Endothelial cell of umbilical vein (primary cell): ENCODE measurements at regions of chr4 and their contacts with region 1.

Region 1: DNA sequence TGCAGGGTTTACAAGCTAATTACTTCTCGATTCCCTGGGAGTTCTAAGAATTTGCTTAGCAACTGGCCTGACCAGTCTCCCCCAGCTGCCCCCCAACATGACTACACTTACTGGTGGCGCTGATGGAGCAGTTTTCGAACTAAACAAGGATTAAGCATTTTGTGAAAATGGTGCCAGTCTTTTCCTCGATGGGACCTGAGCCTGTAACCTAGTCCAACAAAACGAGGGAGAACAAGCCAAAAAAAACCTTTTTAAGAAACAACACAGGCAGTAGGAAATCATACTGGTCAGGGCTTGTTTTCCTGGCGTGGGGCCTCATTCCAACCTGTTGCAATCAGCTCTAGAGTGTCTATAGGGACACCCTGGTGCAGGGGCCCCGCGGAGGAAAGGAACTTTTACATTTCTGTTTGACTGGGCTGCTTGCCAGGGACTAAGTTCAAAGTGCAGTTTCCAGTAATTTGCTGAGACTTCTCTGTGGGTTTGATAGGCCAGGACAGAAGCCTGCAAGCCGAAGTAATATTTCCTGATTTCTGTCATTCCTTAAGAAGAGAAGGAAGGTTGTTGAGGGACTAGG is 158.7 kb downstream of the SPRY1 start:
- DNase-seq: peak; percentile 97
- H3K4me3 ChIP-seq: no peak overlapping the region
- H3K27ac ChIP-seq: no peak overlapping the region
- H3K4me1 ChIP-seq: peaks cover 29% of the 10 kb centered on the region
- H3K27me3 ChIP-seq: peaks cover 32 to 50% of the 10 kb centered on the region in 2 experiments
- CTCF ChIP-seq: no peak
- POLR2A ChIP-seq: no peak

Region 2: DNA sequence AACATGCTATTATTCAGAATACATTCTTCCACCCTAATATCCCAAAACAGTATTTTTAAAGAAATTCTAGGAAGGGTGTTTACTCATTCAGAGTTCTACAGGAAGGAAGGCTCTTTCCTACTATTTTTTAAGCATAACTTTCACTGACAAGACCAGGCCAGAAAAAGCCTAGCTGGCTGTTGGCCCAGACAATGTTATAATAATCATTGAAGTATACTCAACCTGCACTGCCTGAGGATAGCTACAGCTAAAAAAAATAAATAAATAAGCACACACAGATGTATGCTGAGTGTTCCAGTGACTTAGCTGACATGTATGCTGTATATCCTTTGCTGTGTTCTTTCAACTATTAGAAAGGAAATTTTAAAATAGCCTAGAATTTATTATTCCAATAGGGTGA is 304.5 kb before region 1 on chr4:
- CTCF ChIA-PET with region 1: no interaction called
- POLR2A ChIA-PET with region 1: no interaction called
- dilution Hi-C with region 1: no loop called
- intact Hi-C with region 1: loop called (anchors 10 kb)
- DNase-seq: peak; percentile 94
- H3K4me3 ChIP-seq: no peak overlapping the region
- H3K27ac ChIP-seq: no peak overlapping the region
- H3K4me1 ChIP-seq: peaks cover 28% of the 10 kb centered on the region
- H3K27me3 ChIP-seq: no peaks in the 10 kb centered on the region
- CTCF ChIP-seq: no peak
- POLR2A ChIP-seq: no peak

Region 3: GRCh38 chr4:123304151-123304964 is 251.0 kb before region 1 on chr4:
- CTCF ChIA-PET with region 1: no interaction called
- POLR2A ChIA-PET with region 1: no interaction called
- dilution Hi-C with region 1: no loop called
- intact Hi-C with region 1: no loop called
- DNase-seq: no peak
- H3K4me3 ChIP-seq: no peak overlapping the region
- H3K27ac ChIP-seq: no peak overlapping the region
- H3K4me1 ChIP-seq: no peaks in the 10 kb centered on the region
- H3K27me3 ChIP-seq: no peaks in the 10 kb centered on the region
- CTCF ChIP-seq: no peak
- POLR2A ChIP-seq: no peak

Region 4: GRCh38 chr4:123325241-123325681 is 230.1 kb before region 1 on chr4:
- CTCF ChIA-PET with region 1: no interaction called
- POLR2A ChIA-PET with region 1: no interaction called
- dilution Hi-C with region 1: no loop called
- intact Hi-C with region 1: no loop called
- DNase-seq: no peak
- H3K4me3 ChIP-seq: no peak overlapping the region
- H3K27ac ChIP-seq: no peak overlapping the region
- H3K4me1 ChIP-seq: no peaks in the 10 kb centered on the region
- H3K27me3 ChIP-seq: no peaks in the 10 kb centered on the region
- CTCF ChIP-seq: no peak
- POLR2A ChIP-seq: no peak

Region 5: DNA sequence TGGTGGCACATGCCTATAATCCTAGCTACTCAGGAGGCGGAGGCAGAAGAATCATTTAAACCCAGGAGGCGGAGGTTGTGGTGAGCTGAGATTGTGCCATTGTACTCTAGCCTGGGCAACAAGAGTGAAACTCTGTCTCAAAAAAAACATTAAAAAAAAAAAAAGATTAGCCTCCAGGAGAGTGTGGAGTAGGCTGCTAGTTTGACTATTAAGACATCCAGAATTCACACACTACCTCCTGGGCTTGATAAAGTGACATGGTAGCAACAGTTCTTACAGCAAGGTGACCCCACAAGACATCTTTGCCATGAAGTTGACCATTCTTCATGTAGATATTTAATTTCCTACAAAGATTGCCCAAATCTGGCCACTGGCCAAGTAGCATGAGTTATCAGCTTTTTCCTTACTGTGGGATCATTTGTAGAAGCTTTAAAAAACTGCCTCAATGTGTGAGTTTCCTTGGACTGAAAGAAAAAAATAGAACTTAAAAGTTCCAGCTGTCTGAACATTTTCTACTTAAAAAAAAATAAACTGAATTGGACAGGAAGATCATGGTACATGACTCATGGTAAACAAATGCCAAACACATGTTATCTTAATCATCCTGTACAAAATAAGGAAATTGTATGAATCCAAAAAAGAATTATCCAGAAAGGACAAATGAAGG is 194.0 kb before region 1 on chr4:
- CTCF ChIA-PET with region 1: no interaction called
- POLR2A ChIA-PET with region 1: no interaction called
- dilution Hi-C with region 1: no loop called
- intact Hi-C with region 1: loop called (anchors 1 kb)
- DNase-seq: peak; percentile 93
- H3K4me3 ChIP-seq: no peak overlapping the region
- H3K27ac ChIP-seq: peak overlapping the region; percentile 98
- H3K4me1 ChIP-seq: peaks cover 24% of the 10 kb centered on the region
- H3K27me3 ChIP-seq: no peaks in the 10 kb centered on the region
- CTCF ChIP-seq: no peak
- POLR2A ChIP-seq: no peak

Region 6: DNA sequence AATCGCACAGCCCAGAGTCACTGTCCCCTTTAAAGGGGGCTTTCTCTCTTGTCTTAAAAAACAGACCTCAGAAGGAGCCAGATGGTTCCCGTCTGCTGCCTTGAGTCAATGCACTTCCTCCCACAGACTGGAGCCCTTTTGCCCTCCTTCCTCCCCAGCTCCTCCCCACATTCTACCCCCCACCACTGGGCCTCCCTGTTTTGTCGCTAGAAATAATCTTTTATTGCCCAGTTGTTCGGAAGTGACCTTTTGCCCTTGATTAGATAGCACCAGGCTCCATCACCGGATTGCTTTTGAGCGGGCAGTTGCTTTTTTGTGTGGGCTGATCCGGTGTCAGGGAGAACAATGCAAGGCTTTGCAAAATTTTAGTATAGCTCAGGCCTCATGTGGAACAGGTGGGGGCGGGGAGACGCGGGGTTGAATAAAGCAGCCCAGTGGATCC is 111.0 kb before region 1 on chr4:
- CTCF ChIA-PET with region 1: no interaction called
- POLR2A ChIA-PET with region 1: no interaction called
- dilution Hi-C with region 1: no loop called
- intact Hi-C with region 1: loop called (anchors 1 kb)
- DNase-seq: peak; percentile 75
- H3K4me3 ChIP-seq: no peak overlapping the region
- H3K27ac ChIP-seq: peak overlapping the region; percentile 45
- H3K4me1 ChIP-seq: peaks cover 22% of the 10 kb centered on the region
- H3K27me3 ChIP-seq: no peaks in the 10 kb centered on the region
- CTCF ChIP-seq: no peak
- POLR2A ChIP-seq: no peak

Region 7: GRCh38 chr4:123505095-123506010 is 50.0 kb before region 1 on chr4:
- CTCF ChIA-PET with region 1: no interaction called
- POLR2A ChIA-PET with region 1: no interaction called
- dilution Hi-C with region 1: no loop called
- intact Hi-C with region 1: loop called (anchors 1 kb)
- DNase-seq: peak; percentile 74
- H3K4me3 ChIP-seq: peak overlapping the region; percentile 35 to 72 (median 61)
- H3K27ac ChIP-seq: peak overlapping the region; percentile 65
- H3K4me1 ChIP-seq: peaks cover 16% of the 10 kb centered on the region
- H3K27me3 ChIP-seq: no peaks in the 10 kb centered on the region
- CTCF ChIP-seq: no peak
- POLR2A ChIP-seq: no peak

Region 8: GRCh38 chr4:123517971-123518370 is 37.3 kb before region 1 on chr4:
- CTCF ChIA-PET with region 1: no interaction called
- POLR2A ChIA-PET with region 1: no interaction called
- dilution Hi-C with region 1: no loop called
- intact Hi-C with region 1: no loop called
- DNase-seq: no peak
- H3K4me3 ChIP-seq: no peak overlapping the region
- H3K27ac ChIP-seq: no peak overlapping the region
- H3K4me1 ChIP-seq: no peaks in the 10 kb centered on the region
- H3K27me3 ChIP-seq: peaks cover 0 to 4% of the 10 kb centered on the region in 2 experiments
- CTCF ChIP-seq: no peak
- POLR2A ChIP-seq: no peak

Region 9: DNA sequence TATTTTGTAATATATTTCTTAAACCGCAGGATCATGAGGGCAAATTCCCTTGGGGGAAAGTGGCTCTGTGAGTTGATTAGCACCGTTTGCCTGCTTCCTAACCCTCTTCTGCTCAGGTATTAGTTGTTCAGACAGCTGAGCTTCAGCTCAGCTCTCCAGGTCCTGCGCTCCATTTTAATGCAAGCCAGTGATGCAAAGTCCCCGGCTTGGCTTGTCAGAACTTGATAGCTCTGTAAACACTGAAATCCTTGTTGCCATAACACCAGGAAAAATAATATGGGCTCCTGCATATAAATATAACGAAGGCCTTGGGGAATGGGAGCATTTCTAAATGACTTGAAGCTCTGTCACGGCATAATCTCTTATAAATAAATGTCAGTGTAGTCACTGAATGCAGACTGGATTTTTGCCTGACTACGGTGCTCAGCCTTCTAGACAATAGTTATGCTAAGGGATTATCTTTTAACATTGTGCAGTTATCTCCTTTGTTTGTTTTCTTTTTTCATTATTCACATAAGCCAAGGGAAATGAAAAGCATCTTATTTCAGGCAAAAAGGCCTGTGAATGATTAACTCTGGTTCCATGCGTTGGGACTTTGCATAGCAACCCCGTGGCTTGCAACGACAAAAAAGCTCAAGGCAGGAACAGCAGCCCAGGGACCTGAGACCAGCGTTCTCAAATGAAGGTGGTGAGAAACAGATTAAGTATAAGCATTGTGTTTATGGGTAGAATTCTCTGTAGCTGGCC is 94.5 kb after region 1 on chr4:
- CTCF ChIA-PET with region 1: no interaction called
- POLR2A ChIA-PET with region 1: no interaction called
- dilution Hi-C with region 1: no loop called
- intact Hi-C with region 1: no loop called
- DNase-seq: no peak
- H3K4me3 ChIP-seq: no peak overlapping the region
- H3K27ac ChIP-seq: no peak overlapping the region
- H3K4me1 ChIP-seq: no peaks in the 10 kb centered on the region
- H3K27me3 ChIP-seq: no peaks in the 10 kb centered on the region
- CTCF ChIP-seq: no peak
- POLR2A ChIP-seq: no peak

Region 10: GRCh38 chr4:124262211-124263179 is 707.2 kb after region 1 on chr4:
- CTCF ChIA-PET with region 1: no interaction called
- POLR2A ChIA-PET with region 1: no interaction called
- dilution Hi-C with region 1: no loop called
- intact Hi-C with region 1: loop called (anchors 5 kb)
- DNase-seq: peak; percentile 86
- H3K4me3 ChIP-seq: no peak overlapping the region
- H3K27ac ChIP-seq: no peak overlapping the region
- H3K4me1 ChIP-seq: no peaks in the 10 kb centered on the region
- H3K27me3 ChIP-seq: no peaks in the 10 kb centered on the region
- CTCF ChIP-seq: peak; percentile 70 to 87
- POLR2A ChIP-seq: no peak